Testis (tissue), 5 donors: ENCODE measurements at regions of chr12 and their contacts with region 1.

Region 1: DNA sequence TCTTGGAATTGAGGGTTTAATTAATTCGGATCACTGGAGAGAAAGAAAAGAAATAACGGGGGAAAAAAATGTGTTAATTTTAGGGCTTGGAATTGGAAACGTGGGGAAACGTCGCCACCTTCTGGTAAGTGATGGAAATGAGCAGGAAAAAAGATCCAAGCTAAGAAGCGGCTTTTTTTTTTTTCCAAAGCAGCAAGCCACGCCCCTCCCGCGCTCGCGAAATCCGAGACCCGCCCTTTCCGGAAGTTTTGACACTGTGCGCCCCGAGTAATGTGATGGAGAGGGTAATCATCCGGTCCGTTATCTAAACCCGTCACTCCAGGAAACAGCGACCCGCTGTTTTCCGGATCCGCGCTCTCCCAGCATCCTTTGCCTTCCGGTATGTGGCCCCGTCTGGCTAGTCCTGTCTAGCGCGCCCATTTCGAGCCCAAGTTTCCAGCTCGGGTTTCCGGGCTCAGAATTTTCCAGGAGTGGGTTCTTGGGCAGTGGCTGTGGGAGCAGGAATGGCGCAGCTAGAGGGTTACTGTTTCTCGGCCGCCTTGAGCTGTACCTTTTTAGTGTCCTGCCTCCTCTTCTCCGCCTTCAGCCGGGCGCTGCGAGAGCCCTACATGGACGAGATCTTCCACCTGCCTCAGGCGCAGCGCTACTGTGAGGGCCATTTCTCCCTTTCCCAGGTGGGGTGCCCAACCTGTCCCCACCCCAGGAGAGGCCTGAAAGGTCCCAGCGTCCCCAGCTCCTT is at the start of gene ALG10B:
- DNase-seq: peak; percentile 96
- H3K4me3 ChIP-seq: peak within 1 kb of the TSS; percentile 62 to 66
- H3K27ac ChIP-seq: peak within 1 kb of the TSS; percentile 63 to 87
- H3K4me1 ChIP-seq: peaks cover 5% of the 10 kb centered on the region
- H3K27me3 ChIP-seq: no peaks in the 10 kb centered on the region
- CTCF ChIP-seq: peak; percentile 45 to 73 (median 70)
- POLR2A ChIP-seq: no peak
- total RNA-seq, gene ALG10B: 6.5 to 9.4 TPM

Region 2: DNA sequence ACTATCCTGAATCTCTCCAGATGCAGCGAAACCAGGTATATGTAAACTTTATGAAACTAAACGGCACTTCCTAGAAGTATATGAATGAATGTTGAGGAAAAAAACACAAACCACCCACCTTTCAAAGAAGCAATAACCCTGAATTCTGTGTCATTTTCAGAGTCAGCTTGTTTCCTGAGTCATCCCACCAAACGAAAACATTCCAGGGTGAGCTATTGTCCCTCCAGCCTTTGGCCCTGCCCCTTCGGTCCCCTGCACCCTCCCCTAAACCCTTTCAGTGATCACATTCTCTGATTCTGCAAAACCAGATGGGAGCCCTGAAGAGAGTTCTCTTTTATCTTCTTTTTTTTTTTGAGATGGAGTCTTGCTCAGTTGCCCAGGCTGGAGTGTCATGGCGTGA is 202.6 kb before region 1 on chr12:
- intact Hi-C with region 1: no loop called
- DNase-seq: no peak
- H3K4me3 ChIP-seq: no peak overlapping the region
- H3K27ac ChIP-seq: no peak overlapping the region
- H3K4me1 ChIP-seq: no peaks in the 10 kb centered on the region
- H3K27me3 ChIP-seq: no peaks in the 10 kb centered on the region
- CTCF ChIP-seq: no peak
- POLR2A ChIP-seq: no peak

Region 3: GRCh38 chr12:38149395-38150286 is 166.9 kb before region 1 on chr12:
- intact Hi-C with region 1: loop called (anchors 10 kb)
- DNase-seq: no peak
- H3K4me3 ChIP-seq: no peak overlapping the region
- H3K27ac ChIP-seq: no peak overlapping the region
- H3K4me1 ChIP-seq: no peaks in the 10 kb centered on the region
- H3K27me3 ChIP-seq: no peaks in the 10 kb centered on the region
- CTCF ChIP-seq: no peak
- POLR2A ChIP-seq: no peak